A549 (cell line): ENCODE measurements at regions of chr2 and their contacts with region 1.

Region 1: GRCh38 chr2:62856228-62857040 is 150.9 kb downstream of the EHBP1 start:
- DNase-seq: no peak
- ATAC-seq: peak; percentile 43 to 48; a peak in 3 of 6 replicates
- H3K4me3 ChIP-seq: no peak overlapping the region
- H3K27ac ChIP-seq: no peak overlapping the region
- H3K4me1 ChIP-seq: peaks cover 14% of the 10 kb centered on the region
- CTCF ChIP-seq: no peak
- EP300 ChIP-seq: no peak
- POLR2A ChIP-seq: no peak
- RAD21 ChIP-seq: no peak

Region 2: GRCh38 chr2:62844311-62845090 is 11.9 kb before region 1 on chr2:
- CTCF ChIA-PET with region 1: interaction called, 10 read pairs
- POLR2A ChIA-PET with region 1: no interaction called
- DNase-seq: no peak
- ATAC-seq: no peak
- H3K4me3 ChIP-seq: no peak overlapping the region
- H3K27ac ChIP-seq: no peak overlapping the region
- H3K4me1 ChIP-seq: no peaks in the 10 kb centered on the region
- CTCF ChIP-seq: no peak
- EP300 ChIP-seq: no peak
- POLR2A ChIP-seq: no peak
- RAD21 ChIP-seq: no peak